ENCODE measurements at regions of chr5 and their contacts with region 1.

Region 1: DNA sequence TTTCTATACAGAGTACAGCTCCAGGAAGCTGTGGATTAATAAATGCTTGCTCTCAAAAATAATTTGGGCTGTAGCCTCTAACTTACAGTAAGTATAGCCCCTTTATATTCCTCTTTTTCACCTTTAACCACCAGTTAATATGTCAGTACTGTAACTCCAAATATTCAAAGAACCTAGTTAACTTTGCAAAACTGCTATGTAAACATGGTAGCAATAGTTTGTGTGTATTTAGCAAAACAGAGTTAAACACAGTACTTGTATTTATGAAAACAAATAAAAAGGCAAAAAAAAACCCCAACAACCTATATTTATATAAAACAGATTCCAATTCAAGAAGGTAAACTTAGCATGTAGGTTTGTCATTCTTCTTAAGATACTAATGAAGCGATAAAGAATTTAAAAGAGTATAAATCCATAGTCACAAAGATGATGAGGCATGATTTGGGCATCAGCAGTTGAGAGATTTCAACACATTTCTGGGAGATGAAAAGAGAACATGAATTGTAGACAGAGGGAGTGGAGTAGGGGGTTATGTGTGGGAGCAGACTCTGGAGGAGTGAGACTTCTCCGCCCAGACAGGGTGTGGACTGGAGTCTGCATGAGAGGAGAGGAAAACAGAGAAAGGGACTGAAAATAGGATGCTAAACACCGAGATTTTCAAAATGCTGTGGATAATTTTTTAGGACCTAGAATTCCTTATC is 47.0 kb upstream of the F2RL1 start:
- DNase-seq: no peak
- H3K4me3 ChIP-seq: no peak overlapping the region
- H3K27ac ChIP-seq: no peak overlapping the region
- H3K4me1 ChIP-seq: peaks cover 6% of the 10 kb centered on the region
- H3K27me3 ChIP-seq: no peaks in the 10 kb centered on the region
- CTCF ChIP-seq: no peak
- POLR2A ChIP-seq: no peak

Region 2: DNA sequence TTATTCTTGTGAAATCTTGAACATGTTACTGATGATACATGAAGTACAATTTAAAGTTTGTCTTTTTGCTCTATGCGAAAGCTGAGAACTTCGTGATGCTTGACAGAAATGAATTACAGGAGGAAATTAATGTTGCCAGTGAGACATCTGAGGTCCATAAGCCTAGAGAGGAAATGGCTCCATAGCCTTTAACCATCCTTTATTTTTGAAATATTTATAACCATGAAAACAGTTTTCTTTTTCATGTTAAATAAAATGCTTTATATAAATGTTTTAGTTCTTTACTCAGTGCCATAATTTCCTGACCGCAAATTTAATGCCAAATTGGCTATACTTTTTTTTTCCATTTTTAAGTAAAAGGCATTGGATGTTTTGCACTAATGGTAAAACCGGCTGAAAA is 177.7 kb before region 1 on chr5:
- CTCF ChIA-PET with region 1: interaction called, 391 read pairs
- POLR2A ChIA-PET with region 1: interaction called, 4 read pairs
- dilution Hi-C with region 1: no loop called
- intact Hi-C with region 1: no loop called
- DNase-seq: no peak
- H3K4me3 ChIP-seq: no peak overlapping the region
- H3K27ac ChIP-seq: no peak overlapping the region
- H3K4me1 ChIP-seq: peaks cover 2% of the 10 kb centered on the region
- H3K27me3 ChIP-seq: peaks cover 22 to 24% of the 10 kb centered on the region in 2 experiments
- CTCF ChIP-seq: no peak
- POLR2A ChIP-seq: no peak

Region 3: DNA sequence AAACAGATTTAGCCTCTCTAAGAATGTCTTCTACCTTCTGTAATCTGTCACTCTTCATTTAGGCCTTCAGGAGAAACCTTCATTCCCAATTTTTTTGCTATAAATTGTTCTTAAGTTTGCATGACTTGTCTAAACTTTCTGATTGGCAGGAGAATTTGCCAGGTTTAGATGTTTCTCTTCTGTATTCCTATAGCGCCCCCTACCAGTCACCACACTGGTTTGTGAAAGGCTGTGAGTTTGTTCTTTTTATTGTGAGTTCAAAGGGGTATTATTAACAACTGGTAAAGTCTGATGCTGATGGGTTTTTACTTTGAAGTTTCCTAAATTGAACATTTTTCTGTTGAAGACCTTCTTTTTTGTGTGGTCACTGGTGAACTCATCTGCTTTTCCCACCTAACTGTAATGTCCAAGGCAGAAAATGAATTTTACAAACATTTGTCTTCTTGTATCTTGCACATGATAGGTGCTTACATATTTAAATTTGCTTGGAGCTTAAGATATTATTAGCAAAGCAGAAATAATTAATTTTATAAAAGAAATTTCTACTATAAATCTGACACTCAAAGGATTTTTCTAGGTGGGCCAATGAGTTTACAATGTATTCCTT is 130.2 kb before region 1 on chr5:
- CTCF ChIA-PET with region 1: interaction called, 54 read pairs
- POLR2A ChIA-PET with region 1: no interaction called
- dilution Hi-C with region 1: no loop called
- intact Hi-C with region 1: loop called (anchors 1 kb)
- DNase-seq: peak; percentile 85
- H3K4me3 ChIP-seq: no peak overlapping the region
- H3K27ac ChIP-seq: peak overlapping the region; percentile 84
- H3K4me1 ChIP-seq: peaks cover 34% of the 10 kb centered on the region
- H3K27me3 ChIP-seq: no peaks in the 10 kb centered on the region
- CTCF ChIP-seq: peak; percentile 66 to 72
- POLR2A ChIP-seq: no peak

Region 4: GRCh38 chr5:76736679-76737556 is 34.9 kb before region 1 on chr5:
- CTCF ChIA-PET with region 1: interaction called, 73 read pairs
- POLR2A ChIA-PET with region 1: no interaction called
- dilution Hi-C with region 1: no loop called
- intact Hi-C with region 1: loop called (anchors 5 kb)
- DNase-seq: peak; percentile 40
- H3K4me3 ChIP-seq: no peak overlapping the region
- H3K27ac ChIP-seq: peak overlapping the region; percentile 40
- H3K4me1 ChIP-seq: peaks cover 23% of the 10 kb centered on the region
- H3K27me3 ChIP-seq: no peaks in the 10 kb centered on the region
- CTCF ChIP-seq: no peak
- POLR2A ChIP-seq: peak; percentile 52

Region 5: GRCh38 chr5:76805850-76806505 is 34.1 kb after region 1 on chr5:
- CTCF ChIA-PET with region 1: interaction called, 15 read pairs
- POLR2A ChIA-PET with region 1: no interaction called
- dilution Hi-C with region 1: no loop called
- intact Hi-C with region 1: no loop called
- DNase-seq: peak; percentile 77
- H3K4me3 ChIP-seq: no peak overlapping the region
- H3K27ac ChIP-seq: peak overlapping the region; percentile 83
- H3K4me1 ChIP-seq: peaks cover 40% of the 10 kb centered on the region
- H3K27me3 ChIP-seq: no peaks in the 10 kb centered on the region
- CTCF ChIP-seq: no peak
- POLR2A ChIP-seq: no peak

Region 6: DNA sequence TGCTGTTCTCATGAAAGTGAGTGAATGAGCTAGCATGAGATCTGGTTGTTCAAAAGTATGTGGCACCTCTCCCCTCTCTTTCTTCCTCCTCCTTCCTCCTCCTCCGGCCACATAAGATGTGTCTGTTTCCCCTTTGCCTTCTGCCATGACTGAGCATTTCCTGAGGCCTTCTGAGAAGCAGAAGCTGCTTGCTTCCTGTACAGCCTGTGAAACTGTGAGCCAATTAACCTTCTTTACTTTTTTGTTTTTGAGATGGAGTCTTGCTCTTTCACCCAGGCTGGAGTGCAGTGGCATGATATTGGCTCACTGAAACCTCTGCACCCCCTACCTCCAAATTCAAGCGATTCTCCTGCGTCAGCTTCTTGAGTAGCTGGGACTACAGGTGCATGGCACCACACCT is 84.1 kb after region 1 on chr5:
- CTCF ChIA-PET with region 1: interaction called, 9 read pairs
- POLR2A ChIA-PET with region 1: no interaction called
- dilution Hi-C with region 1: no loop called
- intact Hi-C with region 1: loop called (anchors 5 kb)
- DNase-seq: peak; percentile 26
- H3K4me3 ChIP-seq: no peak overlapping the region
- H3K27ac ChIP-seq: no peak overlapping the region
- H3K4me1 ChIP-seq: peaks cover 5% of the 10 kb centered on the region
- H3K27me3 ChIP-seq: no peaks in the 10 kb centered on the region
- CTCF ChIP-seq: no peak
- POLR2A ChIP-seq: no peak